ENCODE measurements at regions of chr1 and their contacts with region 1.

Region 1: GRCh38 chr1:51616901-51617708 is at the start of gene OSBPL9:
- DNase-seq: peak; percentile 83 to 95 (median 90)
- H3K4me3 ChIP-seq: peak within 1 kb of the TSS; percentile 59 to 99 (median 87)
- H3K27ac ChIP-seq: peak within 1 kb of the TSS; percentile 28 to 97 (median 90)
- H3K27me3 ChIP-seq: no peaks in the 10 kb centered on the region
- CTCF ChIP-seq: peak in 8 of 56 donors; percentile 7 to 26 (median 17)
- total RNA-seq, gene OSBPL9: 37.0 to 103 (median 54.2) TPM

Region 2: DNA sequence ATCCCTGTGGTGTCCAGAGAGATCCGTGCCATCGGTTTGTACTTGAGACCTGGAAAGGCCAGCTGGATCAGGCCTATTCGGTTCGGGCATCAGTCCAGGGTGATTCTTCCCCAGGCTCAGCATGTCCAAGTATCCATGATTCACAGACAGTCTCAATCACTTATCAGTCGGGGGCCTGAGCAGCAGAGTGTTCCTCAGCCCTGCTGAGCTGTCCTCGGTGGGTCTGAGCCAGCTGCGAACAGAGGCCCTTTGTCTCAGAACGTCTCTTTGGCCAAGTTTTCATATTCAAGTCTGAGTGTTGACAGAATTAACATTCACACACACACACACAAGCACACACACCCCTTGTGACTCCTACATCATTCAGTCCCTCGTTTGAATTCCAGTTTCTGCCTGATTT is 33.6 kb before region 1 on chr1:
- intact Hi-C with region 1: loop called (anchors 5 kb)
- DNase-seq: peak; percentile 32 to 94 (median 86)
- H3K4me3 ChIP-seq: peak overlapping the region in 23 of 59 donors; percentile 0 to 52 (median 18)
- H3K27ac ChIP-seq: peak overlapping the region; percentile 42 to 92 (median 81)
- H3K27me3 ChIP-seq: no peaks in the 10 kb centered on the region
- CTCF ChIP-seq: peak in 2 of 56 donors; percentile 11 to 13

Region 3: DNA sequence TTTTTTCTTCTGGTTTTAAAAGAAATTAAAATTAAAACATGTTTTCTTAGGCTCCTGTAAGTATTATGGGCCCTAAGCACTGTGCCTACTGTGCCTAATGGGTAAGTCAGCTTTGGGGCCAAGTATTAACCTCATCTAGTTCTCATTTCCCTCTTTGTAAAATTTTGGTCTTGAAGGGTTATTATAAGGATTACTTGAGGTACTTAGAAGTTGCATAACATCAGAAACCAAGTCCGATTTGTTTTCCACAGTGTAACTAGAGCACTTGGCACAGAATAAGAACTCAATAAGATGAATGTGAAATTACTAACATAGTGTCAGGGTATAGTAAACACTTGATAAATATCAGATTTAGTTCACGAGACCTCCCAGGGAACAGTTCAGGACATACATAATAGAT is 16.6 kb before region 1 on chr1:
- intact Hi-C with region 1: loop called in 1 of 2 experiments (anchors 1 kb)
- DNase-seq: no peak
- H3K4me3 ChIP-seq: no peak overlapping the region
- H3K27ac ChIP-seq: no peak overlapping the region
- H3K27me3 ChIP-seq: no peaks in the 10 kb centered on the region
- CTCF ChIP-seq: no peak

Measured in dorsolateral prefrontal cortex (tissue), 120 donors.